BJ (cell line): ENCODE measurements at regions of chr12 and their contacts with region 1.

Region 1: GRCh38 chr12:13362260-13362841 is 165.8 kb downstream of the EMP1 start:
- DNase-seq: no peak
- H3K4me3 ChIP-seq: no peak overlapping the region
- H3K27me3 ChIP-seq: peaks cover 2% of the 10 kb centered on the region; the same call in 1 of the 2 replicates
- CTCF ChIP-seq: peak; percentile 89

Region 2: GRCh38 chr12:12859690-12860089 is 502.7 kb before region 1 on chr12:
- CTCF ChIA-PET with region 1: no interaction called
- POLR2A ChIA-PET with region 1: no interaction called
- DNase-seq: no peak
- H3K4me3 ChIP-seq: no peak overlapping the region
- H3K27me3 ChIP-seq: no peaks in the 10 kb centered on the region
- CTCF ChIP-seq: no peak

Region 3: GRCh38 chr12:13347241-13348043 is 14.9 kb before region 1 on chr12:
- CTCF ChIA-PET with region 1: interaction called, 23 read pairs
- POLR2A ChIA-PET with region 1: no interaction called
- DNase-seq: peak; percentile 39
- H3K4me3 ChIP-seq: no peak overlapping the region
- H3K27me3 ChIP-seq: no peaks in the 10 kb centered on the region
- CTCF ChIP-seq: 0 out of 2 replicates have a peak, but pooled peaks have one; percentile 10

Region 4: DNA sequence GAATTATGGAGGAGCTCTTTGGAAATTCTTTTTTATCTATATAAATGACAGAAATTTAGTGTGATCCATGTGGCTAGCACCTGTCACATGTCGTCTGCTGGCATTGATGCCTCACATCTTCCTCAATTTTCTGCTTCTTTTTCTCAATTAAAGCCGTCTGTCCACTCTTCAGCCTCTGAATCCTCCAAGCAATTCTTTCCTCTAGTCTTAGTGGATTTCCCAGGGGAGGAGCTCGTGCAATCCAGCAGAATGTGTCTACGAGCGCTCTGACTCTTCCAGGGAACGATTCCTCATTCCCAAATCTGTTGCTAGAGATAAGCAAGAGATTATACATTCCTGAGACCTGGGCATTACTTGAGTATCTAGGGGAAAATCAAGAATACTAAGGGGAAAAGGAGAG is 10.8 kb after region 1 on chr12:
- CTCF ChIA-PET with region 1: interaction called, 16 read pairs
- POLR2A ChIA-PET with region 1: no interaction called
- DNase-seq: no peak
- H3K4me3 ChIP-seq: no peak overlapping the region
- H3K27me3 ChIP-seq: no peaks in the 10 kb centered on the region; the same call in 1 of the 2 replicates
- CTCF ChIP-seq: no peak

Region 5: GRCh38 chr12:13499008-13499407 is 136.7 kb after region 1 on chr12:
- CTCF ChIA-PET with region 1: no interaction called
- POLR2A ChIA-PET with region 1: no interaction called
- DNase-seq: no peak
- H3K4me3 ChIP-seq: no peak overlapping the region
- H3K27me3 ChIP-seq: no peaks in the 10 kb centered on the region
- CTCF ChIP-seq: no peak

Region 6: DNA sequence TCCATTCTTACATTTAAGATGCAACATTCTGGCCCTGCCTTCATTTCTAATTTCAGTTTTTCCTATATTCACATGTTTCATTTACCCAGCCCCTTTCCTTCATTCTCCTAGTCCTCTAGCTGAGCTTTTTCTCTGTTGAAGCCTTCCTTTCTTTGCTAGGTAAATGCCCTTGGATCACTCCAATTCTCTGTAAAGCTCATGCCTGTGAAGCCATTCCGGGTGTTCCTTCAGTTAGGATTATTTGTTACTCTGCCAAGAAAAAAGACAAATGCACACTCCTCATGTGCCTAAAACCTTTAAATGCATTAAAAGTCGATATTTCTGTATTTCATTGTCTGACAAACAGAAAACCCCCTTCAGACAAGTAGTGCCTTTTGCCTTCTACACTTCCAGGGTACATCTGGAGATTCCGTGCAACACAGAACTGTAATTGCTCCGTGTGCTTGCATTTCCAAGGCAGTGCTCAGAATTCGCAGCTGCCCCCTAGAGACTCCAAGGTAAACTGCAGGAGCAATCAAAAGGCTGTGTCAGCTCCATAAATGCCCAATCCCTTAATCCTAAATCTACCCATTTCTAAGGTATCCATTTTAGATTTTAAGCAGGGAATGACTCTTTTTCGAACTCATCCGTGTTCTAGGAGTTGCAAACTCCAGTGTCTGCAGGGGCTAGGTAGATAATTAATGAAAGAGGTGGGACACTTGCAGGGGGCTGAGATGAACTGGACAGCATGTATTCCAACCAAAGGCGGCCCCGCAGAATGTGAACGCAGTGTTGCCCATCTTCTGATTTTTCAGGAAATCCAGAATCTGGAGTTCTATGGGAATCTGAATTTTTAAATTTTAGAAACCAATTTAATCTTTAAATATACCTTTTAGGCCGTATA is 298.9 kb after region 1 on chr12:
- CTCF ChIA-PET with region 1: interaction called, 28 read pairs
- POLR2A ChIA-PET with region 1: no interaction called
- DNase-seq: peak; percentile 4
- H3K4me3 ChIP-seq: no peak overlapping the region
- H3K27me3 ChIP-seq: no peaks in the 10 kb centered on the region
- CTCF ChIP-seq: peak; percentile 91